ENCODE measurements at regions of chr7 and their contacts with region 1.

Region 1: GRCh38 chr7:157336383-157337315 is at the start of gene DNAJB6:
- DNase-seq: peak; percentile 90 to 94 (median 93)
- H3K4me3 ChIP-seq: peak within 1 kb of the TSS; percentile 73 to 98 (median 95)
- H3K4me3 Mint-ChIP-seq: peak within 1 kb of the TSS; percentile 92 to 96
- H3K27ac ChIP-seq: peak within 1 kb of the TSS; percentile 92 to 94
- H3K27ac Mint-ChIP-seq: peak within 1 kb of the TSS; percentile 91 to 97 (median 95)
- H3K4me1 ChIP-seq: peaks cover 24 to 37% of the 10 kb centered on the region in 2 donors
- H3K4me1 Mint-ChIP-seq: peaks cover 42% of the 10 kb centered on the region
- H3K27me3 ChIP-seq: no peaks in the 10 kb centered on the region
- H3K27me3 Mint-ChIP-seq: no peaks in the 10 kb centered on the region
- CTCF ChIP-seq: no peak
- polyA plus RNA-seq, gene DNAJB6: 66.6 to 117 (median 116) TPM

Region 2: DNA sequence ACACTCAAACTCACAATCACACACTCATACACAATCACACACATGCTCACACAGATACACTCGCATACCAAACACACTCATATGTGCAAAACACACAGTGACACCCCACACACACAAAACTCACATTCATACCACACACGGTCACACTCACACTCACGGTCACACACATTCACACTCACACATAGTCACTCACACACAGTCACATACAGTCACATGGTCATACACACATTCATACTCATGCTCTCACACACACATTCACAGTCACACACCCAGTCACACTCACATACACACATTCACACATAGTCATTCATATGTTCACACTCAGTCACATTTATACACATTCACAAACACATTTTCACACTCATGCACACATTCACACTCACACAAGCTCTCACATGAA is 992.1 kb before region 1 on chr7:
- intact Hi-C with region 1: no loop called
- DNase-seq: no peak
- H3K4me3 ChIP-seq: no peak overlapping the region
- H3K4me3 Mint-ChIP-seq: no peak overlapping the region
- H3K27ac ChIP-seq: no peak overlapping the region
- H3K27ac Mint-ChIP-seq: no peak overlapping the region
- H3K4me1 ChIP-seq: no peaks in the 10 kb centered on the region
- H3K4me1 Mint-ChIP-seq: no peaks in the 10 kb centered on the region
- H3K27me3 ChIP-seq: no peaks in the 10 kb centered on the region
- H3K27me3 Mint-ChIP-seq: no peaks in the 10 kb centered on the region
- CTCF ChIP-seq: no peak

Region 3: GRCh38 chr7:156881679-156882078 is 455.0 kb before region 1 on chr7:
- intact Hi-C with region 1: no loop called
- DNase-seq: no peak
- H3K4me3 ChIP-seq: no peak overlapping the region
- H3K4me3 Mint-ChIP-seq: no peak overlapping the region
- H3K27ac ChIP-seq: no peak overlapping the region
- H3K27ac Mint-ChIP-seq: no peak overlapping the region
- H3K4me1 ChIP-seq: no peaks in the 10 kb centered on the region
- H3K4me1 Mint-ChIP-seq: peaks cover 23% of the 10 kb centered on the region
- H3K27me3 ChIP-seq: no peaks in the 10 kb centered on the region
- H3K27me3 Mint-ChIP-seq: peaks cover 0 to 2% (median 0%) of the 10 kb centered on the region in 3 donors
- CTCF ChIP-seq: no peak

Region 4: DNA sequence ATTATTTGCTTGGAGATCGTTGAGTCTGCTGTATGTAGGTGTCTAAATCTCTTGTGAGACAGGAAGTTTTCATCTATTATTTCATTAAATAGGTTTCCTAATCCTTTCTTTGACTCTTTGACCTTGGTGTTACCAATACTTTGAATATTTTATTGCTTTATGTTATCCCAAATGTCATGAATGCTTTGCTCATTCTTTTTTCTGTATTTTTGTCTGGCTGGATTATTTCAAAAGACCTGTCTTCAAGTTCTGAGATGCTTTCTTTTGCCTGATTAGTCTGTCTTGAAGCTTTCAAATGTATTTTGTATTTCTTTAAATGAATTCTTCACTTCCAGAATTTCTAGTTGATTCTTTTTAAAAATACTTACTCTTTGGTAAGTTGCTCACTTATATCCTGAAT is 170.7 kb before region 1 on chr7:
- intact Hi-C with region 1: no loop called
- DNase-seq: no peak
- H3K4me3 ChIP-seq: no peak overlapping the region
- H3K4me3 Mint-ChIP-seq: no peak overlapping the region
- H3K27ac ChIP-seq: no peak overlapping the region
- H3K27ac Mint-ChIP-seq: peak overlapping the region in 1 of 7 donors; percentile 43
- H3K4me1 ChIP-seq: no peaks in the 10 kb centered on the region
- H3K4me1 Mint-ChIP-seq: no peaks in the 10 kb centered on the region
- H3K27me3 ChIP-seq: no peaks in the 10 kb centered on the region
- H3K27me3 Mint-ChIP-seq: peaks cover 0 to 2% (median 0%) of the 10 kb centered on the region in 3 donors
- CTCF ChIP-seq: no peak

Region 5: GRCh38 chr7:157273208-157274093 is 63.2 kb before region 1 on chr7:
- intact Hi-C with region 1: loop called (anchors 10 kb)
- DNase-seq: peak; percentile 53 to 72 (median 60)
- H3K4me3 ChIP-seq: no peak overlapping the region
- H3K4me3 Mint-ChIP-seq: peak overlapping the region; percentile 34 to 67
- H3K27ac ChIP-seq: no peak overlapping the region
- H3K27ac Mint-ChIP-seq: peak overlapping the region in 4 of 7 donors; percentile 41 to 91 (median 80)
- H3K4me1 ChIP-seq: peaks cover 51 to 54% of the 10 kb centered on the region in 2 donors
- H3K4me1 Mint-ChIP-seq: peaks cover 47% of the 10 kb centered on the region
- H3K27me3 ChIP-seq: no peaks in the 10 kb centered on the region
- H3K27me3 Mint-ChIP-seq: peaks cover 0 to 3% (median 2%) of the 10 kb centered on the region in 3 donors
- CTCF ChIP-seq: peak; percentile 98

Region 6: DNA sequence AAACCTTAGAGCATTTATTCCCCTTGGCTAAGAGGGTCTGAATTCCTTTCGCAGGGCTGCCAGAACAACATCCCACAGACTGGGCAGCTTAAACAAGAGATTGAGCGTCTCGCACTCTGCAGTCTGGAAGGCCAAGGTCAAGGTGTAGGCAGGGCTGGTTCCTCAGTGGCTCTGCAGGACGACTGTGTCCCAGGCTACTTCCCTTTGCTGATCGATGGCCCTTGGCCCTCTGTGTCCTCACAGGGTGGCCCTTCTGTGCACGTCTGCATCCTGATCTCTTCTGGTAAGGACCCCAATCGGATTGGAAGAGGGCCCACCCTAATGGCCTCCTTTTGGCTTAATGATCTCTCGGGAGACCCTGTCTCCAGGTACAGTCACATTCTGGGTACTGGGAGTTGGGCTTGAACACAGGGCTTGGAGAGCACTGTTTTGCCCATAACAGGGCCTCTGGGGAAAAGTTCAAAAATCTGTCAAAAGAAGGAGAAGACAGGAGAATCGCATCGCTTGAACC is 35.0 kb before region 1 on chr7:
- intact Hi-C with region 1: loop called (anchors 1 to 2 kb)
- DNase-seq: peak in 2 of 3 donors; percentile 43 to 48
- H3K4me3 ChIP-seq: peak overlapping the region in 2 of 3 experiments; percentile 17 to 54
- H3K4me3 Mint-ChIP-seq: peak overlapping the region; percentile 67 to 80
- H3K27ac ChIP-seq: peak overlapping the region; percentile 96 to 98
- H3K27ac Mint-ChIP-seq: peak overlapping the region; percentile 96 to 100 (median 98)
- H3K4me1 ChIP-seq: peaks cover 52 to 57% of the 10 kb centered on the region in 2 donors
- H3K4me1 Mint-ChIP-seq: peaks cover 63% of the 10 kb centered on the region
- H3K27me3 ChIP-seq: no peaks in the 10 kb centered on the region
- H3K27me3 Mint-ChIP-seq: peaks cover 0 to 3% (median 0%) of the 10 kb centered on the region in 3 donors
- CTCF ChIP-seq: no peak